Esophagus squamous epithelium (tissue), 5 donors: ENCODE measurements at regions of chr4 and their contacts with region 1.

Region 1: DNA sequence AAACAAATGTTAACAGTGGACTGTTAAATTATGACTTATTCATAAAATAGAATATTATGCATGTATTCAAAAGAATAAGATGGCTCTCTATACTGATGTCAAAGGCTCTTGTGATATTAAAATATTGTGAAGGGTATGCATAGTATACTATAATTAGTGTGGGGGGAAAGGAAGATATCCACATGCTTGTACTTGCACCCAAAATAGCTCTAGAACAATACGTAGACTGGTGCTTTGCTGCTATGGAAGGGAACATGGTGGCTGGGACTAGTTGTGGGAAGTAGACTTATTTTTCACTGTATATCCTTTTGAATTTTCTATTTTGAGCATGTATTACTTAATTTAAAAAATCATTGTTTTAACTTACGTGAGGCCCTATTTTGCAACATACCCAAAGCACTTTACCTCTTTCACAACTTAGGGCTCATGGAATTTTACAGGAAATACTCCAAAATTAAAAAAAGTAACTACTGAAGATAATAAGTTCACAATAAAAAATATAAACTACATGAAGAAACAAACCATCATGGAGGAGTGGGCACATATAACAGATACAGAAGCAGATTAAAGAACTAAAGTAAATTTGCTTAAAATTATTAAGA is 7.9 kb downstream of the PGRMC2 start:
- DNase-seq: no peak
- H3K4me3 ChIP-seq: no peak overlapping the region
- H3K27ac ChIP-seq: no peak overlapping the region
- H3K4me1 ChIP-seq: peaks cover 0 to 53% (median 4%) of the 10 kb centered on the region in 3 donors
- H3K27me3 ChIP-seq: no peaks in the 10 kb centered on the region
- CTCF ChIP-seq: no peak
- POLR2A ChIP-seq: no peak

Region 2: GRCh38 chr4:128141866-128142265 is 137.9 kb before region 1 on chr4:
- intact Hi-C with region 1: no loop called
- DNase-seq: no peak
- H3K4me3 ChIP-seq: no peak overlapping the region
- H3K27ac ChIP-seq: no peak overlapping the region
- H3K4me1 ChIP-seq: no peaks in the 10 kb centered on the region
- H3K27me3 ChIP-seq: no peaks in the 10 kb centered on the region
- CTCF ChIP-seq: no peak
- POLR2A ChIP-seq: no peak

Region 3: GRCh38 chr4:128379860-128380259 is 100.1 kb after region 1 on chr4:
- intact Hi-C with region 1: loop called (anchors 5 kb)
- DNase-seq: no peak
- H3K4me3 ChIP-seq: no peak overlapping the region
- H3K27ac ChIP-seq: peak overlapping the region in 2 of 4 donors; percentile 11 to 17
- H3K4me1 ChIP-seq: peaks cover 4 to 64% (median 23%) of the 10 kb centered on the region in 3 donors
- H3K27me3 ChIP-seq: no peaks in the 10 kb centered on the region
- CTCF ChIP-seq: peak in 5 of 6 experiments; percentile 36 to 62 (median 46)
- POLR2A ChIP-seq: no peak

Region 4: GRCh38 chr4:128393101-128393704 is 113.5 kb after region 1 on chr4:
- intact Hi-C with region 1: no loop called
- DNase-seq: no peak
- H3K4me3 ChIP-seq: no peak overlapping the region
- H3K27ac ChIP-seq: peak overlapping the region; percentile 11 to 87 (median 48)
- H3K4me1 ChIP-seq: peaks cover under 1 to 38% (median 8%) of the 10 kb centered on the region in 3 donors
- H3K27me3 ChIP-seq: no peaks in the 10 kb centered on the region
- CTCF ChIP-seq: no peak
- POLR2A ChIP-seq: no peak